ENCODE measurements at regions of chr11 and their contacts with region 1.

Region 1: DNA sequence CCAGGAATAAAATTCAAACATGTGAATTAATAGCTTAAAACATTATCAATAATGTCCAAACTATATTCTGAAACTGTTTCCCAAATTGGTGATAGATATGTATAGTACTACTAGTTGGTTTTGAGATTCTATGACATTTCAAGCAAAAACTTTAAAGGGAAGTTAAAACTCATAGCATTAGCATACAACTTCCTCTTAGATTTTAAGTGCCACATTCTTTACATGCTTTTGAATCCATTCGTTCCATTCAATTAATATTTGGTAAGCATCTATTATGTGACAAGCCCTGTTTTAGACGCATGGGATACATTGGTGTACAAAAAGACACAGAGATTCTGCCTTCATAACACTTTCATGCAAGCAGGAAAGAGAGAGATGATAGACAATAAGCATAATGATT is 8.9 kb downstream of the PATL1 start:
- DNase-seq: no peak
- H3K4me3 ChIP-seq: no peak overlapping the region
- H3K27ac ChIP-seq: no peak overlapping the region
- H3K4me1 ChIP-seq: no peaks in the 10 kb centered on the region
- H3K27me3 ChIP-seq: no peaks in the 10 kb centered on the region
- CTCF ChIP-seq: no peak

Region 2: DNA sequence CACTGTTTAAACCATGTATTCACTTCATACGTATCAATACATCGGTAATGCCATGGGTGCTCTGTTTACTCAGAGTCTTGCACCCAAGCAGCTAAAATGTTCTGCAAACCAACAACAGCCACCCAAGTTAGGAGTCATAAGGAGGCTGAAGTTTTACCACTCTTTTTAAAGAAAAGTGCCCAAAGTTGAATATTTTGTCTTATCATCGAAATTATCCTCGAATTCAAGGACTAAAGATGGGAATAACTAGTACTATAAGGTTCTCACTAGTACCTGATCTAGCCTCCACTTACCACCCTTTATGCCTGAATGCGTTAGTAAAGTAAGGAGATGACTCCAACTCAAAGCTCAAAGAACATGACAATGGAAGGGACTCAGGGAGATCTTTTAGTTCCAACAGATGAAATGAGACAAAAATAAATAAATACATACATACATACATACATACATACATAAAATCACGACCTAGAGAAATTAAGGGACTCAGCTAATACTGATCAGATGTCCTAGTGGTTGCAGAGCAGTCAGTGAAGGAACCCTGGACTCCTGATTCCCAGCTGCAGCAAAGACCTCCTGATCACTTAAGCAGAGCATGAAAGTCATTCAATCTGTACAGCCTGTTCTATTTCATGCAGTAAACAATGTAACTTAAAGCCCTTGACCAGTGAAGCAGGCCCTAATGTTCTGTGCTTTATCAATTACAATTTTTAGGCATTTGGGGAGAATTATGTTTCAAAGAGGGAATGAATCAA is 52.1 kb before region 1 on chr11:
- intact Hi-C with region 1: loop called (anchors 5 kb)
- DNase-seq: no peak
- H3K4me3 ChIP-seq: no peak overlapping the region
- H3K27ac ChIP-seq: no peak overlapping the region
- H3K4me1 ChIP-seq: peaks cover 7% of the 10 kb centered on the region
- H3K27me3 ChIP-seq: no peaks in the 10 kb centered on the region
- CTCF ChIP-seq: no peak